ENCODE measurements at regions of chr3 and their contacts with region 1.

Region 1: DNA sequence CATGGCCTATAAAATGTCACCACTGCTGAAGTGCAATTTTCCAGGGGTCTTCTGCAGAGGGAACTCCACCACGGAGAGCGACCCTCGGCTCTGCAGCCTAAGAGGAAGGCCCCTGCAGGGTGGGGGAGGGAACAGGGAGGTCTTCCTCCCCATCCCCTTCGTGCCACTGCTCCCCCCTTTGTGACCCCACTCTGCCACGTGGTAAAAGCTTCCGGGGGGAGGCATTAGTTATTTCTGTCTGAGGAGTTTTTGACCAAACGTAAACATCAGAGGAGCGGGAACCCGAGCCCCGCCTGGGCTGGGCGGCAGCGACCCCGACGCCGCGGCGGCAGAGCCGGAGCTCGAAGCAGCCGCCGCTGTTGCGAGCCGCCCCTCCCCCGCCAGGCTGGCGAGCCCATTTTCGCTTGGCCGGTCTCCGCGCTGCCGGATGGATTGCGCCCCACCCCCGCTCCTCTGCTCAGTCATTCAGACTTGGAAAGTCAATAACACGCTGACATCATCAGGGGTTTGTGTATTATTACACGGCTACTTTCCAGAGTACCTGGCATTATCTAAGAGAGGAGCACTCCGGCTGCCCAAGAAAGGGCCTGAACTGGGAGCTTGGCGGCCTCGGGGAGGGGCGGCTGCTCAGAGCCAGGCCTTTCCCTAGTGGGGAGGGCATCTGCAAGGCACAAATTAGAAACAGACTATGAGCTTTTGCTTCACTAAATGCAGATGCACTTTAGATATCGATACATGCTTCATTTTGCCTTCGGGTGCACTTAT is 162.5 kb upstream of the TBL1XR1 start:
- DNase-seq: peak; percentile 98
- H3K4me3 ChIP-seq: peak overlapping the region; percentile 48 to 59 (median 50)
- H3K27ac ChIP-seq: peak overlapping the region; percentile 79 to 92 (median 90)
- H3K4me1 ChIP-seq: peaks cover 67 to 75% (median 72%) of the 10 kb centered on the region in 4 donors
- H3K27me3 ChIP-seq: no peaks in the 10 kb centered on the region
- CTCF ChIP-seq: peak in 1 of 3 experiments; percentile 33
- EP300 ChIP-seq: peak; percentile 93
- POLR2A ChIP-seq: no peak

Region 2: GRCh38 chr3:177050501-177051237 is 309.1 kb before region 1 on chr3:
- intact Hi-C with region 1: loop called (anchors 5 kb)
- DNase-seq: no peak
- H3K4me3 ChIP-seq: no peak overlapping the region
- H3K27ac ChIP-seq: no peak overlapping the region
- H3K4me1 ChIP-seq: peaks cover 15 to 26% (median 22%) of the 10 kb centered on the region in 4 donors
- H3K27me3 ChIP-seq: no peaks in the 10 kb centered on the region
- CTCF ChIP-seq: peak; percentile 61 to 72 (median 63)
- EP300 ChIP-seq: no peak
- POLR2A ChIP-seq: no peak

Region 3: GRCh38 chr3:177410730-177411129 is 51.0 kb after region 1 on chr3:
- intact Hi-C with region 1: no loop called
- DNase-seq: no peak
- H3K4me3 ChIP-seq: no peak overlapping the region
- H3K27ac ChIP-seq: no peak overlapping the region
- H3K4me1 ChIP-seq: no peaks in the 10 kb centered on the region
- H3K27me3 ChIP-seq: no peaks in the 10 kb centered on the region
- CTCF ChIP-seq: no peak
- EP300 ChIP-seq: no peak
- POLR2A ChIP-seq: no peak

Region 4: GRCh38 chr3:177764377-177764912 is 404.7 kb after region 1 on chr3:
- intact Hi-C with region 1: loop called (anchors 10 kb)
- DNase-seq: no peak
- H3K4me3 ChIP-seq: no peak overlapping the region
- H3K27ac ChIP-seq: peak overlapping the region; percentile 50 to 71 (median 68)
- H3K4me1 ChIP-seq: peaks cover 16 to 36% (median 28%) of the 10 kb centered on the region in 4 donors
- H3K27me3 ChIP-seq: no peaks in the 10 kb centered on the region
- CTCF ChIP-seq: no peak
- EP300 ChIP-seq: no peak
- POLR2A ChIP-seq: no peak

Region 5: DNA sequence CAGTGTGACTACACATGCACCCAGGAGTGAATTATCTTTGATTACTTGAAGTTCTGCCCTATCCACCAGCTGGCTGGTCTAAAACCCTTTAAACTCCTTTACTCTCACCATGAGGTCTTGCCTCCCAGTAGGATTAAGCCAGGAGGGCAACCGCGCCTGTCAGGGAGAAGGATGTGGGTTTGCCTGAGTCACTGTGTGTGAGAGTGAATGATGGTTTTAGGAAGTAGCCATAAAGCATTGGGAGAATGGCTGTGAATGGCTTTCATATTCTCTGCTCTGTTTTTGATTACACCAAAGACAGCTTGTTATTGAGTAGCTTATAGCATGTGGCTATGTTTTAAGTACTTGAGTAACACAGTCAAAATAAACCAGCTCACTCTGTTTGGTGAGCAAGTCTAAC is 475.2 kb after region 1 on chr3:
- intact Hi-C with region 1: loop called (anchors 10 kb)
- DNase-seq: no peak
- H3K4me3 ChIP-seq: no peak overlapping the region
- H3K27ac ChIP-seq: peak overlapping the region; percentile 60 to 71 (median 67)
- H3K4me1 ChIP-seq: peaks cover 27 to 80% (median 74%) of the 10 kb centered on the region in 4 donors
- H3K27me3 ChIP-seq: no peaks in the 10 kb centered on the region
- CTCF ChIP-seq: no peak
- EP300 ChIP-seq: no peak
- POLR2A ChIP-seq: no peak

Region 6: GRCh38 chr3:178325330-178325729 is 965.6 kb after region 1 on chr3:
- intact Hi-C with region 1: loop called (anchors 10 kb)
- DNase-seq: no peak
- H3K4me3 ChIP-seq: no peak overlapping the region
- H3K27ac ChIP-seq: no peak overlapping the region
- H3K4me1 ChIP-seq: peaks cover 19 to 28% (median 23%) of the 10 kb centered on the region in 4 donors
- H3K27me3 ChIP-seq: no peaks in the 10 kb centered on the region
- CTCF ChIP-seq: peak; percentile 40 to 60 (median 54)
- EP300 ChIP-seq: no peak
- POLR2A ChIP-seq: no peak

Measured in esophagus muscularis mucosa (tissue), 4 donors.